BJ (cell line): ENCODE measurements at regions of chr7 and their contacts with region 1.

Region 1: GRCh38 chr7:144835652-144836544 is at the start of gene TPK1:
- DNase-seq: peak; percentile 60
- H3K4me3 ChIP-seq: peak within 1 kb of the TSS; percentile 64
- H3K27me3 ChIP-seq: no peaks in the 10 kb centered on the region
- CTCF ChIP-seq: no peak
- polyA plus RNA-seq, gene TPK1: 1.2 and 1.5 TPM in 2 replicates

Region 2: DNA sequence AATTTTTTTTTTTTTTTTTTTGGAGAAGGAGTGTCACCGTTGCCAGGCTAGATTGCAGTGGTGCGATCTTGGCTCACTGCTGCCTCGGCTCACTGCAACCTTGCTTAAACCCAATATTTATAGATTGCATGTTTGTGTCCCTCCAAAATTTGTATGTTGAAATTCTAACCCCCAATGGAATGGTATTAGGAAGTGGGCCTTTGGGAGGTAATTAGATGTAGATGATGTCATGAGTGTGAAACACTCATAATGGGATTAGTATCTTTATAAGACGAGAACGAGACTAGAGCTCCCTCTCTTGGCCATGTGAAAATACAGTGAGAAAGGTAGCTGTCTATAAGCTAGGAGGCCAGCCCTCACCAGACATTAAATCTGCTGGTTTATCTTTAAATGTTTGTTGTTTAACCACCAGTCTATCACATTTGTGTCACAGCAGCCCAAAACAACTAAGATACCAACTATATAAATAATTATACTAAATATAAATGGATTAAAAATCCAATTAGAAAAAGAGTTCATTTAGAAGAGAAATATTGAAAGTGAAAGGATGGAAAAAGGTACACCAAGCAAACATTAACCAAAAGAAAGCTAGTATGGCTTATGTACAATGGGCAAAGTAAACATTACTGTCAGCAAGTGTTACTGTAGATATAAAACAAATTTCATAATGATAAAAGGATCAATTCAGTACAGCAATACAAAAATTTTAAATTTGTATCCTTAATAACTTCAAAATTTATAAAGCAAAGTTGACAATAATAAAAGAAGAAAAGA is 943.2 kb before region 1 on chr7:
- CTCF ChIA-PET with region 1: no interaction called
- POLR2A ChIA-PET with region 1: no interaction called
- DNase-seq: no peak
- H3K4me3 ChIP-seq: no peak overlapping the region
- H3K27me3 ChIP-seq: no peaks in the 10 kb centered on the region
- CTCF ChIP-seq: peak; percentile 29; the same call in 1 of the 2 replicates

Region 3: DNA sequence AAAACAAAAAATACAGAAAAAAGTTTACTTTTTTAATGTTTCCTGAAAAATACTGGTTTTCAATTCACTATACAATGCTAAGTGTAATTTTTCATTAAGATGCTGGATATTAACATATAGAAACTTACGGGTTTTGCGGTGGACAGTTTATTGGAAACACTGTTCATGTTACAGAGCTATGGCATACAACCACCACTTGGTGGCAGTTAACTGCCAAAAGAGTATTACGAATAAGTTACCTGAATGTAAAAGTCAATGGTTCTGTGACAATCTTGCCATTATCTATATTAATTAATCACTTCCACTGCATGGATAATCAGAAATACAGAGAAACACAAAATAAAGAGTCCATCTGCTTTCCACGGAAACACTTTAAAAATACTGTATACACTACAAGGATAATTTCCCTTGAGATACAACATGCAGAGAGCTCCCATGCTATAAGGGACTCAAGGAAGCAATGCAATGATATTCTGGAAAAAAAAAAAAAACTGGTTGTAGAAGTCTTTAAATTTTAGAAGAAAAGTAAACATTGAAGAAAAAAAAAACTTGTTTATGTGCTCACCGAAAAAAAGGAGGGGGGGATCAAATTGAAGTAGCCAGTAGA is 97.1 kb before region 1 on chr7:
- CTCF ChIA-PET with region 1: no interaction called
- POLR2A ChIA-PET with region 1: no interaction called
- DNase-seq: no peak
- H3K4me3 ChIP-seq: no peak overlapping the region
- H3K27me3 ChIP-seq: no peaks in the 10 kb centered on the region
- CTCF ChIP-seq: peak; percentile 62

Region 4: DNA sequence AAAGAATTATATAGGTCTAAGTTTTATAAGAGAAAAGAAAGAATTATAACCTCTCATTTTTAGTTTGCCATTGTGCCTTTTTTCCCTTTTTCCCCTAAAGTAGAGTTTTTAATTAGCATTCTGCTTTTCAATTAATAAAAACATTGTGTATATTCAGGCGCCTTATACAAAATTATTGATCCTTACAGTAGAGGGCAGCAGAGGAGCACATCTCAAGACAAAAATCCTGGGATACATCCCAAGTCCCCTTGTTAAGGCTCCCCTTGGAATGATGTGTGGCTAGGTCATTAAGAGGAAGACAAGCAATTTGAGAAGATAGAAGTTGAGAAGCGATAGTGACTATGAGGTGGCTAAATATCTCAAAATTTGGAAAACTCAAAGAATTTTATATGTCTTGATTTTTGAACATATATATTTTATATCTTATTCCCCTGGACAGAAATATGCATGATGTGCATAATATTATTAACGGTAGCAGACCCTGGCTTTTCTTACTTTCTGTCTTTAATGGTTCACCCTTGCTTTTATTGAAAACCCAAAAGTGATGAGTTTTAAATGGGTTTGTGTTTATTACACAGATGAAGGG is 19.0 kb after region 1 on chr7:
- CTCF ChIA-PET with region 1: interaction called, 10 read pairs
- POLR2A ChIA-PET with region 1: no interaction called
- DNase-seq: no peak
- H3K4me3 ChIP-seq: no peak overlapping the region
- H3K27me3 ChIP-seq: no peaks in the 10 kb centered on the region
- CTCF ChIP-seq: peak; percentile 55

Region 5: DNA sequence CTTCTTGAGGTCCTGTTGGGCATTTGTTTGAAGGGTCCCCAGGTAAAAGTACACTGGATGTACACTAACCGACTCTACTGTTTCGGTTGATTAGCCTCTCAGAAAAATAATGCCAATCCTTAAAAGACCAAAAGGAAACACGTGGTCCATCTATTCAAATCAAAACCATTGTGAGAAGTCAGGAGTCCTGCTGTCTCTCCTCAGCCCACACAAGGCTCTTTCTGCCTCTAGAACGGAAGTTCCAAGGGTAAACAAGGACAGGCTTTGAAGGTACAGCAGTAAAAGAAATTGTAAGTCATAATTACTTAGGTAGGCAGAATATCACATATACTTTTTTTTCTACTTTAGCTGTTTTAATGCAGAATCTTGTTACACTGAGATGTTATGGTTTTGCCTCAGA is 71.7 kb after region 1 on chr7:
- CTCF ChIA-PET with region 1: no interaction called
- POLR2A ChIA-PET with region 1: no interaction called
- DNase-seq: no peak
- H3K4me3 ChIP-seq: no peak overlapping the region
- H3K27me3 ChIP-seq: no peaks in the 10 kb centered on the region
- CTCF ChIP-seq: no peak